Activated CD4-positive, alpha-beta memory T cell treated with anti-CD3 and anti-CD28 coated beads for 36 hours (primary cell): ENCODE measurements at regions of chr15 and their contacts with region 1.

Region 1: DNA sequence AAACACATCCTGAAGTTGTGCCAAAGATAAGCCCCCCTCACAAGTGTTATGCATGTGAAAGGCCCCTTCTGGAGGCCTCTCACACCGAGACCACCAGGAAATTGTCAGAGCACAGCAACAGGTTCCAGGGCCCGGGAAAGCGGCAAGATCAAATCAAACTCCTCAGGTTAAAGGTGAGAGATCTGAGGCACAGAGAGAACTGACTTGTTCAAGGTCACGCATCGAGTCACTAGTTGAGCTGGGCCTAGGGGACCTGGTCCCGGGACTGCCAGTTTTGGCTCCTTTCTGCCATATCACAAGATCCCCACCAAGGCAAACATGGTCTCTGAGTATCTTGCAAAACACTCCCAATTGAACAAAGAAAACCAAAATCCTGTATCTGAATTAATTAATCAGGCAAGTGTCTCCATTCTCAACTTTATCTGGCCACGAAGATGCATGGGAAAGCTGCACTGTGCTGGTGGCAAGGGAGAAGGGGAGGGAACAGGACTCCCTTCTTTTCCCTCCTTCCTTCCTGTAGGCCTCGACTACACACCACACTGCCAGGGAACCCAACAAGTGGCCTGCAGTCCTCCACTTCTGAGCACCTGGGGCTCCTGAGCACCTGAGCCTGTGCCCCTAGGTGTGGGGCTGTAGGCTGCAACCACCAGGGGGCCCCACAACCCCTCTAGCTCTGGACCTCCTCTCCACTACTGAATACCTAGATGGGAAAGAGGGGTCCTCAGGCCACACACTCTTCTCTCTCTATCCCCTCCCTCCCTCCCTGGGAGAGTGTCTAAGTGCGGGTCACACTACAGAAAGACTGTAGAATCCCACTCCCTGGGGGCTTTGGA is 37.3 kb downstream of the ANP32A start:
- DNase-seq: peak; percentile 72
- H3K4me3 Mint-ChIP-seq: no peak overlapping the region
- H3K27ac Mint-ChIP-seq: peak overlapping the region; percentile 88
- H3K4me1 Mint-ChIP-seq: peaks cover 23% of the 10 kb centered on the region
- H3K27me3 Mint-ChIP-seq: no peaks in the 10 kb centered on the region

Region 2: DNA sequence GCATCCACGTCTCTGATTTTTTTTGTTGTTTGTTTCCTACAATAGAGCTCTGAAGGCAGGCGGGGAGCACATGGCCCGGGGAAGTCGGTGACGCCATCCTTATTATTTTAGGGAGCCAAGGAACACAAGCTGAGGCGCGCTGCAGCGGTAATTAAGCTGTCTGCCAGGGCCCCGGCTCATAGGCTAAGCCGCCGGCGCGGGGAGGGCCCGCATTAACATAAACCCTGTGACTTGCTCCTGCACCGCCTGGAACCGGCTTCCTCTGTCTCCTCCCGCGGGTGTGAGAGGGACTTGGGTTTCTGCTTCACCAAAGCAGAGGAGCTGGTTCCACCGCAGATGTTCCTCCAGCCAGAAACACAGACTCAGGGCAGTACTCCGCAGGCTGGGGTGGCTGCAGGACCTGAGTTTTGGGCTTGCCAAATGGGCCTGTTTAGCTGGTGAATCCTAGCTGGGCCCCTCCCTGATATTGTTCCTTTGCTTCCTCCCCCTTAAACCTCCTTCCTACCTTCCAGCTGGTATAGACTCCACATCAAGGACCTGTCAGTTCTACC is 11.9 kb after region 1 on chr15:
- CTCF ChIA-PET with region 1: interaction called, 36 read pairs
- POLR2A ChIA-PET with region 1: interaction called, 8 read pairs
- intact Hi-C with region 1: loop called (anchors 1 kb)
- DNase-seq: peak; percentile 80
- H3K4me3 Mint-ChIP-seq: peak overlapping the region; percentile 25
- H3K27ac Mint-ChIP-seq: no peak overlapping the region
- H3K4me1 Mint-ChIP-seq: peaks cover 97% of the 10 kb centered on the region
- H3K27me3 Mint-ChIP-seq: no peaks in the 10 kb centered on the region

Region 3: DNA sequence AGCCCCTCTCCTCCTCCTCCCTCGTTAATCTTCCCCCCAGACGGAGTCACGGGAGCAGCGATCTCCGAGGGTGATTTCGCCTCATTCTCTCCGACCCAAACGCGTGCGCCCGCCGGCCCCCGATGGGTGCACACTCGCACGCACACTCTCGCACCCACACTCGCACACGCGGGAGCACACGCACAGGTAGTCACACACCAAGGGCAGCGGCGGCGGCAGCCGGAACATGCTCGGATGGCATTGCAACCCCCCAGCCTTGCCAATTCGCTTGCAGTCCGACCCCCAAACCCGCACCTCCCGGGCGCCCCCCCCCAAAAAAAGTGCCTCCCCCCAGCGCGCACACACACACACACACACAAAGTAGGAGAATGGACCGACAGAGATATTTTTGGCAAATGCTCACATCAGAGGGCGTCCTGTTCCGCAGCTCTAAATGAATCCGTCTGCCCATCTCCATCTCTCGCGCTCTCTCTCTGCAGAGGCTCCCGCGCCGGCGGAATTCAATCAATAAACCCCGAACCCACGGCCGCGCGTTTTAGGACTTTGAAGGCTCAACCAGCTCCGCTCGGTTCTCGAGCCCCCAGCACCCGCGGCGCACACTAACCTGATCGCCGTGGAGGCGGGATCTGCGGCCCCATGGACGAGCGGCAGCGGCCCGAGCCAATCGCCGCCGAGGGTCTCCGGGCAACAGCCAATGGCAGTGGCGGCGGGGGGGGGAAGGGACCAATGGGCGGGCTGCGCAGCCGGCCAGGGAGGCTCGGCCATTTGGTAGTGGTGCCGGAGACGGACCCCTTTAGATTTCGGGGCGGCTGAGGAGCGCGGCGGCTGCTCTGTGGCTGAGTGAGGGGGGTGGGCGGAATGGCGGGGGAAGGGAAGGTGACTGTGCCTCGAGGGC is 37.1 kb after region 1 on chr15 and contains the start of gene ANP32A:
- CTCF ChIA-PET with region 1: interaction called, 9 read pairs
- POLR2A ChIA-PET with region 1: interaction called, 7 read pairs
- intact Hi-C with region 1: loop called (anchors 1 kb)
- DNase-seq: peak; percentile 96
- H3K4me3 Mint-ChIP-seq: peak within 1 kb of the TSS; percentile 99
- H3K27ac Mint-ChIP-seq: peak within 1 kb of the TSS; percentile 99
- H3K4me1 Mint-ChIP-seq: peaks cover 31% of the 10 kb centered on the region
- H3K27me3 Mint-ChIP-seq: no peaks in the 10 kb centered on the region
- total RNA-seq, gene ANP32A: 190 to 204 TPM

Region 4: DNA sequence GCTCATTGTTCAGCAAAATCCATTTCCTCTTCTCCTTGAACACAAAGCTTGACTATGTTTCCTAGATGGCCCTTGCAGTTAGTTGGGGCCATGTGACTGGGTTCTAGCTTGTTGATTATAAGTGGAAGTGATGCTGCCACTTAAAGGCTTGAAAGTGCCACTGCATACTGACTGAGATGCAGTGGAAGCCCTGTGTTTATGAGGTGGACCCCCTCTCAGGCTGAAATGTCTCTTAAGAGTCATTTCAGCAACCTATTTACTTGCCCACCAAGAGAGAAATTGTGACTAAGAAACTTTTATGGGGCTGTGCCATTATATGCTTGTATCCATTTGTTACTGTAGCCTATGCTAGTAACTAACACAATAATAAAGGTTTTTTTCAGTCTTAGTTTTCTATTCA is 45.6 kb after region 1 on chr15:
- CTCF ChIA-PET with region 1: interaction called, 16 read pairs
- POLR2A ChIA-PET with region 1: no interaction called
- intact Hi-C with region 1: loop called (anchors 1 kb)
- DNase-seq: peak; percentile 32
- H3K4me3 Mint-ChIP-seq: no peak overlapping the region
- H3K27ac Mint-ChIP-seq: no peak overlapping the region
- H3K4me1 Mint-ChIP-seq: peaks cover 14% of the 10 kb centered on the region
- H3K27me3 Mint-ChIP-seq: peaks cover 3% of the 10 kb centered on the region